ENCODE measurements at regions of chr10 and their contacts with region 1.

Region 1: GRCh38 chr10:17228091-17228940 is at the start of gene VIM:
- DNase-seq: peak; percentile 84
- H3K4me3 ChIP-seq: peak within 1 kb of the TSS; percentile 94
- H3K27ac ChIP-seq: peak within 1 kb of the TSS; percentile 98
- H3K27me3 ChIP-seq: no peaks in the 10 kb centered on the region
- CTCF ChIP-seq: peak; percentile 26
- polyA plus RNA-seq, gene VIM: 4,126 and 4,378 TPM in 2 replicates

Region 2: GRCh38 chr10:16853201-16853600 is 375.1 kb before region 1 on chr10:
- CTCF ChIA-PET with region 1: interaction called, 16 read pairs
- POLR2A ChIA-PET with region 1: interaction called, 5 read pairs
- DNase-seq: no peak
- H3K4me3 ChIP-seq: no peak overlapping the region
- H3K27ac ChIP-seq: no peak overlapping the region
- H3K27me3 ChIP-seq: no peaks in the 10 kb centered on the region
- CTCF ChIP-seq: peak; percentile 68

Region 3: DNA sequence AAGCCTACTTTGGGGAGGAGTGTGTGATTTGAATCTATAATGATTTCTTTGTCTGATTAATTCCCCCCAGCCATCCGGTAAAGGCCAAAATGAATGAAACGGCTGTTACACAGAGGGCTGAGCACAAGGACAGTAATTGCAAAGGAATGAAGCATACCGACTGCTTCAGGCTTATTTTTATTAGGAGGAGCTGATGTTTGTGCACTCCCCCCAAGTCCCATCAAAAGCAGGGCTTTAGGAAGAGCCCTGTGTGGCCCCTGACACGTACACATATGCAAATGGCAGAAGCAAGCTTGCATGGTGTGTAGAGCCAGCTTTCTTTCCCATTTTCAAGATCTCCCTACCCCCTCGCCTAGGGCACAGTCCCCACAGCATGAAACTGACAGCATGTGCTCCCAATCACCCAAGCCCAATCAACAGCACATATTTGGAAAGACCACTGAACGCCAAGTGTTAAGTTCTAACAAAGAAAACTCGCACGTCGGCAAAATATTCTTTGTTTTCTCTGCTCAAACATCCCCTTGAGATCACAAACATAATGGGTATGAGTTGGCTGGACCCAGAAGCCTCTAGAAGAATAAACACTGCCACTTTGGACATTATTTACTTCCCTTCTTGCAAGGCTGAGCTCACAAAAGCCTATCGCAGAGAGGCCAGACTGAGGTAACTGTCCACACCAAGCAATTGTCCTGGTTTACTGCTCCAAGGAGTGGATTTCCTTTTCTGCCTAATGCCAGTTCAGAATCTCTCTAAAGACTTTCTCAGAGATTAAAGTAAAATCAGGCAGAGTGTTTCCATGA is 241.7 kb before region 1 on chr10:
- CTCF ChIA-PET with region 1: no interaction called
- POLR2A ChIA-PET with region 1: interaction called, 13 read pairs
- DNase-seq: peak; percentile 67
- H3K4me3 ChIP-seq: no peak overlapping the region; the same call in 1 of the 2 replicates
- H3K27ac ChIP-seq: peak overlapping the region; percentile 96
- H3K27me3 ChIP-seq: no peaks in the 10 kb centered on the region
- CTCF ChIP-seq: no peak

Region 4: GRCh38 chr10:17200912-17201793 is 27.2 kb before region 1 on chr10 and contains the start of gene TRDMT1:
- CTCF ChIA-PET with region 1: interaction called, 3 read pairs
- POLR2A ChIA-PET with region 1: interaction called, 54 read pairs
- DNase-seq: no peak
- H3K4me3 ChIP-seq: peak within 1 kb of the TSS; percentile 75
- H3K27ac ChIP-seq: peak within 1 kb of the TSS; percentile 94
- H3K27me3 ChIP-seq: no peaks in the 10 kb centered on the region
- CTCF ChIP-seq: no peak
- polyA plus RNA-seq, gene TRDMT1: 5.2 and 7.1 TPM in 2 replicates

Region 5: DNA sequence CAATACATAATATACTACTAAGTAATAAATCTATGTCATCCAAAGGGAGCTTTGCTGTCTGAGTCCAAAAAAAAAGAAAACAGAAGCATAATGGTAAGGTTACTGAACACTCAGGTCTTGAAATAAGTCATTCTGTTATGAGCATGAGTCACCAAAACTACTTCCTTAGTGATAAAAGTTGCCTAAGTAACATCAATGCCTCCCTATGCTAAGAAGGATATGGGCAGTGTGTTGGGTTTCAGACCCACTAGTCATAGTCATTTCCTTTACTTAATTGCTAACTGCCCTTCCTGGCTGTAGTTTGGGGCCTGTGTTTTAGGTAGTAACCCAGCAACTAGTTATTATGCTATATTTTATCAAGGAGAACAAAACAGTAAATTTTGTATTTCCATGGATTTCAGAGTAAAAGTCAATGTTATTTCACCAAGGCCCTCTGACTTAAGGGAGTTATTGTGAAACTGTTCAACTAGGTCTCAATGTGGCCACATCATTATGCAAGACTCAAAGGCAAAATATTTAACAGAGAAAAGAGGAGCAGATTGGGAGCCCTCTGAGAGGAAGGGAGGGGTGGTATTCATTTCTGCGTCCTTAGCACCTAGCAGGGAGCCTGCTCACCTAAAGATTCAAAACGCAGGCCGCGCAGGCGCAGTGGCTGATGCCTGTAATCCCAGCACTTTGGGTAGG is 12.0 kb before region 1 on chr10:
- CTCF ChIA-PET with region 1: interaction called, 9 read pairs
- POLR2A ChIA-PET with region 1: interaction called, 39 read pairs
- DNase-seq: no peak
- H3K4me3 ChIP-seq: no peak overlapping the region
- H3K27ac ChIP-seq: peak overlapping the region; percentile 94
- H3K27me3 ChIP-seq: no peaks in the 10 kb centered on the region
- CTCF ChIP-seq: no peak